ENCODE measurements at regions of chr3 and their contacts with region 1.

Region 1: GRCh38 chr3:84991422-84991900 is 32.7 kb downstream of the CADM2 start:
- DNase-seq: no peak
- ATAC-seq: no peak
- H3K4me3 ChIP-seq: no peak overlapping the region
- H3K27ac ChIP-seq: no peak overlapping the region
- H3K4me1 ChIP-seq: no peaks in the 10 kb centered on the region
- H3K27me3 ChIP-seq: no peaks in the 10 kb centered on the region
- CTCF ChIP-seq: no peak
- POLR2A ChIP-seq: no peak

Region 2: GRCh38 chr3:84904816-84905555 is 86.5 kb before region 1 on chr3:
- intact Hi-C with region 1: loop called in 1 of 10 experiments (anchors 5 kb)
- DNase-seq: no peak
- ATAC-seq: no peak
- H3K4me3 ChIP-seq: no peak overlapping the region
- H3K27ac ChIP-seq: no peak overlapping the region
- H3K4me1 ChIP-seq: no peaks in the 10 kb centered on the region
- H3K27me3 ChIP-seq: no peaks in the 10 kb centered on the region
- CTCF ChIP-seq: no peak
- POLR2A ChIP-seq: no peak

Region 3: DNA sequence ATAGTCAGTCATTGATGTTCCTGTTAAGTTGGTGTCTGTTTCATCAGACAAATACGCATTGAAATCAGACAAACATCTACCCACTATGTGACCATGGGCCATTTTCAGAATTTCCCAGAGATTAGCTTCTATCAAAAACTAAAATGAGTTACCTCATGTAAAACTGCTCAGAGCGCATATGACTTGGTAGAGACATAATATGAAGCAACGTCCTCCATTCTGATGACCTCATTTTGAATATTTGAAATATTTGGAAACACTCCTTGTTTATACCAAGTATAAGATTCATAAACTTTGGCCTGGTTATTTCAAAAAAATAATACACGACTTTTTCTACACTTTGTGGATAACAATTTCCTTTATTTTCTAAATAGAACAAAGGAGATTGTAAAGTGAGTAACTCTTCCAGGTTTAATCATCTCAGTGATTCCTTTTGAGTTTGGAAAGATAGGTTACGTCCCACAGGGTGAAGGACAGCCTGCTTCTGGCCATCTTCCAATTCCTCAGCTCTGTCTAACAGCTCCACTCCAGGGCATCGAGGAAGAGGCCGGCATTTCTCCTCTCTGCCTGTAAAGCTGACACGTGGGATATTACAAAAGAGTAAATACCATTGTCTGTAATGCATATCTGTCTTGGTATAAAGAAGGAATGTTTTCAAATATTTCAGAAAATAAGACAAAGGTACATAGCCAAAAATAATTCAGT is 89.9 kb after region 1 on chr3:
- intact Hi-C with region 1: no loop called
- DNase-seq: no peak
- ATAC-seq: no peak
- H3K4me3 ChIP-seq: no peak overlapping the region
- H3K27ac ChIP-seq: no peak overlapping the region
- H3K4me1 ChIP-seq: no peaks in the 10 kb centered on the region
- H3K27me3 ChIP-seq: no peaks in the 10 kb centered on the region
- CTCF ChIP-seq: no peak
- POLR2A ChIP-seq: no peak

Region 4: GRCh38 chr3:85838921-85839320 is 847.5 kb after region 1 on chr3:
- intact Hi-C with region 1: no loop called
- DNase-seq: no peak
- ATAC-seq: no peak
- H3K4me3 ChIP-seq: no peak overlapping the region
- H3K27ac ChIP-seq: no peak overlapping the region
- H3K4me1 ChIP-seq: no peaks in the 10 kb centered on the region
- H3K27me3 ChIP-seq: no peaks in the 10 kb centered on the region
- CTCF ChIP-seq: no peak
- POLR2A ChIP-seq: no peak